ENCODE measurements at regions of chr1 and their contacts with region 1.

Region 1: GRCh38 chr1:67760030-67760821 is 73.0 kb downstream of the GNG12 start:
- DNase-seq: peak; percentile 76
- CTCF ChIP-seq: peak; percentile 76

Region 2: GRCh38 chr1:67559222-67559700 is 201.0 kb before region 1 on chr1:
- in situ Hi-C with region 1: loop called (anchors 10 kb)
- DNase-seq: no peak
- CTCF ChIP-seq: no peak

Region 3: GRCh38 chr1:68608289-68608688 is 848.1 kb after region 1 on chr1:
- in situ Hi-C with region 1: no loop called
- DNase-seq: no peak
- CTCF ChIP-seq: no peak

Measured in GM13977 (cell line).